HEK293 (cell line): ENCODE measurements at regions of chr17 and their contacts with region 1.

Region 1: DNA sequence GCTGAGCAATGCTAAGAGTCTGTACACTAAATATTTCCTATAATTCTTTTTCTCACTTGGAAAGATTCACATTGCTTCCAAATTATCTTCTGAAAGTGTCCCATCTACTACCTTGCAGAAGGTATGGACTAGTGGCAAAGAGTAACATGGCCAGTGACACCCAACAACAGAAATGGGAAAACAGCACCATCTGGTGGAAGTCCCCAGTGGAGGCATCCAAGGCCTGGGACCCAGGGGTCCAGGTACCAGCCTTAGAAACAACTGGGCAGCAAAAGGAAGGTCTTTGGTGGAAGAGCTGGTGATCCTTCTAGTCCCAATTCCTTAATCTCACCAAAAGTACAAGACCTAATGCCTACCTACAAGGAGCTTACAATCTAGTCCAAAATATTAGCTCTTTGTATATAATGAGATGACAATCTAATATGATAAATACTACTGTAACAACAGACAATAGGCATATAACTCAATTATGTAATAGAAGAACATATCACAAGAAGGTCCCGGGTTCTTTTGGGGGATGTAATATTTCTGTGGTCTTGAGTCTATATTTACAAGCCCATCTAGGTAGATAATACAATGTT is 55.3 kb downstream of the SKAP1 start:
- H3K4me3 ChIP-seq: no peak overlapping the region
- H3K27ac ChIP-seq: no peak overlapping the region
- H3K4me1 ChIP-seq: no peaks in the 10 kb centered on the region
- CTCF ChIP-seq: no peak

Region 2: GRCh38 chr17:48250949-48251348 is 123.8 kb before region 1 on chr17:
- CTCF ChIA-PET with region 1: no interaction called
- POLR2A ChIA-PET with region 1: no interaction called
- H3K4me3 ChIP-seq: no peak overlapping the region
- H3K27ac ChIP-seq: no peak overlapping the region
- H3K4me1 ChIP-seq: peaks cover 34% of the 10 kb centered on the region
- CTCF ChIP-seq: no peak

Region 3: GRCh38 chr17:48351831-48352332 is 22.9 kb before region 1 on chr17:
- CTCF ChIA-PET with region 1: interaction called, 44 read pairs
- POLR2A ChIA-PET with region 1: no interaction called
- H3K4me3 ChIP-seq: no peak overlapping the region
- H3K27ac ChIP-seq: no peak overlapping the region
- H3K4me1 ChIP-seq: peaks cover 3% of the 10 kb centered on the region; the same call in 1 of the 2 replicates
- CTCF ChIP-seq: no peak

Region 4: DNA sequence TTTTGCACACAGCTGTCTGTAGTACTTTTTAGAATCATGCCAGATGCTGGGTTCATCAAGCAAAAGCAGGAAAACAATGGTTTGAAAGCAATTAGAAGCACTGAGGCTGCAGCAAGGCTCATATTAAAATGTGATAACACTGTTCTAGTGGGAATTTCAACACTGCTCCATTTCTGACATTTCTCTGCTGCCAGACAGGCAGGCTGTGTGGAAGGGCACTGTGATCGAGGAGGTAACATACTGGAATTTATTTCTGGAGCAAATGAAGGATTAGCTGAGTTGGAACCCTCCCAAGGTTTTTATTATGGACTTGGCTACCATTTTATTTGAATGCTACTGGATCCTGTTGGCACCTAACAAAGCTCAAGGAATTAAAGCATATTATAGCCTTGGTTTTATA is 11.6 kb before region 1 on chr17:
- CTCF ChIA-PET with region 1: interaction called, 15 read pairs
- POLR2A ChIA-PET with region 1: no interaction called
- H3K4me3 ChIP-seq: no peak overlapping the region
- H3K27ac ChIP-seq: no peak overlapping the region
- H3K4me1 ChIP-seq: no peaks in the 10 kb centered on the region
- CTCF ChIP-seq: no peak

Region 5: DNA sequence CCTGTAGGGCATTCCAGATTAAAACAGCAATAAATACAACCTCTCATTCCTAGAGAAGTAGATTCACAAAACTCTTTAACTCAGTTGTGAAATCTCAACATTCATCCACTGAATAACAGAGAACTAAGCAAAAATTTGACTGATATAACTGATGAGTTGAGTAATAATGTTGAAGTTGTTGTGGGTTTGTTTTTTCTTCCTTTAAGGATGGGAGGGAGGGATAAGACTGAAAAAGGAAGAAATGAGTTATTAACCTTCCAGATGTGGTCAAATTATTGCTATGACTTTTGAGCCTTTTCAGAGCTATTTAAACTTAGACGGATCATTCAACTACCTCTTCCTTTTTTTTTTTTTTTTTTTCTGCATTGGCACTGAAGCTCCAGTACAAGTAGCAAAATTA is 16.7 kb after region 1 on chr17:
- CTCF ChIA-PET with region 1: interaction called, 22 read pairs
- POLR2A ChIA-PET with region 1: no interaction called
- H3K4me3 ChIP-seq: no peak overlapping the region
- H3K27ac ChIP-seq: no peak overlapping the region
- H3K4me1 ChIP-seq: peaks cover 22% of the 10 kb centered on the region
- CTCF ChIP-seq: no peak